ENCODE measurements at regions of chr20 and their contacts with region 1.

Region 1: GRCh38 chr20:56343861-56344381 is 14.9 kb upstream of the FAM210B start:
- DNase-seq: peak; percentile 55
- ATAC-seq: peak; percentile 83
- H3K4me3 Mint-ChIP-seq: no peak overlapping the region
- H3K27ac Mint-ChIP-seq: no peak overlapping the region
- H3K4me1 Mint-ChIP-seq: peaks cover 2% of the 10 kb centered on the region
- H3K27me3 Mint-ChIP-seq: peaks cover 54% of the 10 kb centered on the region

Region 2: GRCh38 chr20:56247948-56248782 is 95.8 kb before region 1 on chr20 and contains the start of gene MC3R:
- CTCF ChIA-PET with region 1: interaction called, 15 read pairs
- POLR2A ChIA-PET with region 1: no interaction called
- DNase-seq: peak; percentile 58
- ATAC-seq: peak; percentile 61
- H3K4me3 Mint-ChIP-seq: no peak within 1 kb of the TSS
- H3K27ac Mint-ChIP-seq: no peak within 1 kb of the TSS
- H3K4me1 Mint-ChIP-seq: no peaks in the 10 kb centered on the region
- H3K27me3 Mint-ChIP-seq: peaks cover 8% of the 10 kb centered on the region
- total RNA-seq, gene MC3R: not detected

Region 3: DNA sequence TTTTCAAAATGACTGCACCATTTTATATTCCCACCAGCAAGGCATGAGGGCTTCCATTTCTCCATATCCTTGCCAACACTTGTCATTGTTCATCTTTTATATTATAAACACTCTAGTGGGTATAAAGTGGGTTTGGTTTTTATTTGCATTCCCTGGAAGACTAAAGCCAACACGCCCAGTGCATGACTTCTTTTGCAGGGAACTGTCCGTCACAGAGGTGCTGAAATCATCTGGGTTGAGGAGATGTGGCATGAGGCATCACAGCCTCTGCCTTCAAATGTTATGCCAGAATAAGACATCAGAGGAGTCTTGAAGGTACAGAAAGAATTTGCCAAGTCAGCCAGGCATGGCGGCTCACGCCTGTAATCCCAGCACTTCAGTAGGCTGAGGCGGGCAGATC is 15.1 kb before region 1 on chr20:
- CTCF ChIA-PET with region 1: no interaction called
- POLR2A ChIA-PET with region 1: no interaction called
- DNase-seq: peak; percentile 33
- ATAC-seq: no peak
- H3K4me3 Mint-ChIP-seq: no peak overlapping the region
- H3K27ac Mint-ChIP-seq: no peak overlapping the region
- H3K4me1 Mint-ChIP-seq: no peaks in the 10 kb centered on the region
- H3K27me3 Mint-ChIP-seq: peaks cover 5% of the 10 kb centered on the region

Region 4: DNA sequence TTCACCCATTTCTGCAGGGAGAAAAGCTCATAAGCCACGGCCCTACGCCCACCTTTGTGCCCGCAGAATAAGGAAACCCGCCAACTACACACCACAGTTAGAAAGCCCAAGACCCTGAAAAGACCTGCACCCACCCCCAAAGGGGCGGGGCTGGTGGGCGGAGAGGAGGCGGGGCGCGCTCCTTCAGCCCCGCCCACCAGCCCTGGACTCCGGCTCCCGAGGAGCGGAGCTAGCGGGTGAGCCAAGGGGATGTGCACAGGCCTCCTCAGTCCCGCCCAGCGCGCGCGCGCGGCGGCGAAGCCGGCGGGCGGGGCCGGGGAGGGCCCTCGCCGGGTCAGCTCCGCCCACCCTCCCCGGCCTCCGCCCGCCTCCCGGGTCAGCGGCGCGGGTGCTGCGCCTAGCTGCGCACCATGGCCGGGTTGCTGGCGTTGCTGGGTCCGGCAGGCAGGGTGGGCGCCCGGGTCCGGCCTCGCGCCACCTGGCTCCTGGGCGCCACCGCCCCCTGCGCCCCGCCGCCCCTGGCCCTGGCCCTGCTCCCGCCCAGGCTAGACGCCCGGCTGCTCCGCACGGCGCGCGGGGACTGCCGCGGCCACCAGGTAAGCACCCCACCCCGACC is 14.8 kb after region 1 on chr20 and contains the start of gene FAM210B:
- CTCF ChIA-PET with region 1: interaction called, 20 read pairs
- POLR2A ChIA-PET with region 1: no interaction called
- DNase-seq: peak; percentile 84
- ATAC-seq: peak; percentile 99
- H3K4me3 Mint-ChIP-seq: peak within 1 kb of the TSS; percentile 82
- H3K27ac Mint-ChIP-seq: peak within 1 kb of the TSS; percentile 43
- H3K4me1 Mint-ChIP-seq: peaks cover 15% of the 10 kb centered on the region
- H3K27me3 Mint-ChIP-seq: peaks cover 2% of the 10 kb centered on the region
- total RNA-seq, gene FAM210B: 5.2 to 5.4 TPM

Region 5: DNA sequence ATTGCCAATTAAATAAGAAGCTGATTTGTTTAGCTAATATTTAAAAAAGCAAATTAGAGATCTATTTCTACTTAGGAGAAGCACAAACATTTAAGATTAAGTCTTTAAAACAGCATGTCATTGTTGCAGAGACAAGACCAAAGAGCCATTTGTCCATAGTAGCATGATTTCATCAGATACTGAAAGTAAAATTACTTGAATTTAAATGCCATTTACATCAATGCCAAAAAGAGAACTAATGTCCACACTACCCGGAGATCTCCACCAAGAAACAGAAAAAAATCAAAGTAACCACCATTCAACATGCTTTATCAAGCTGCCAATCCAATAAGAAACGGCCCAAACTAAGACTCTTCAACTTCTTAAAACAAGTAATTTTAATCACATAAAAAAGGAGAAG is 32.4 kb after region 1 on chr20:
- CTCF ChIA-PET with region 1: no interaction called
- POLR2A ChIA-PET with region 1: no interaction called
- DNase-seq: no peak
- ATAC-seq: no peak
- H3K4me3 Mint-ChIP-seq: no peak overlapping the region
- H3K27ac Mint-ChIP-seq: peak overlapping the region; percentile 13
- H3K4me1 Mint-ChIP-seq: peaks cover 44% of the 10 kb centered on the region
- H3K27me3 Mint-ChIP-seq: no peaks in the 10 kb centered on the region

Region 6: DNA sequence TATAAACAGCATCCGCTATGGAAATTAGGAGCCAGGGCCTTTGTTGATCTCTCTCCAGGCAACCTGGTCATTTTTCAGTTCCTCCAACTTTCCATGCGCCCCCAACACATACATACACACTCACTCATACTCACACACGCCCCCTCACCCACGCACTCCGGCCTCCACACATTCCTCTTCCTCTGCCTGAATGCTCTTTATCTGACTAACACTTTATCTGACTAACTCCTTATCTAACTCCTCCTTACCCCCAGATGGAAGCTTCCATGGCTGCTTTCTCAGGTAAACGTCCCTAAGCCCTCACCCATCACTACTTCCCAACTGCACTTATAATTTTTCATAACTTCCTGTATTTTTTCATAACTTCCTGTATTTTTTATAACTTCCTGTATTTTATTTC is 85.6 kb after region 1 on chr20:
- CTCF ChIA-PET with region 1: no interaction called
- POLR2A ChIA-PET with region 1: no interaction called
- DNase-seq: no peak
- ATAC-seq: peak; percentile 40
- H3K4me3 Mint-ChIP-seq: peak overlapping the region; percentile 68
- H3K27ac Mint-ChIP-seq: peak overlapping the region; percentile 90
- H3K4me1 Mint-ChIP-seq: peaks cover 62% of the 10 kb centered on the region
- H3K27me3 Mint-ChIP-seq: no peaks in the 10 kb centered on the region

Measured in activated CD8-positive, alpha-beta T cell treated with anti-CD3 and anti-CD28 coated beads, Interleukin-2, amount 10 ng/mL, durations not matched to agents 7 days and 5 days (primary cell).